ENCODE measurements at regions of chr21 and their contacts with region 1.

Region 1: DNA sequence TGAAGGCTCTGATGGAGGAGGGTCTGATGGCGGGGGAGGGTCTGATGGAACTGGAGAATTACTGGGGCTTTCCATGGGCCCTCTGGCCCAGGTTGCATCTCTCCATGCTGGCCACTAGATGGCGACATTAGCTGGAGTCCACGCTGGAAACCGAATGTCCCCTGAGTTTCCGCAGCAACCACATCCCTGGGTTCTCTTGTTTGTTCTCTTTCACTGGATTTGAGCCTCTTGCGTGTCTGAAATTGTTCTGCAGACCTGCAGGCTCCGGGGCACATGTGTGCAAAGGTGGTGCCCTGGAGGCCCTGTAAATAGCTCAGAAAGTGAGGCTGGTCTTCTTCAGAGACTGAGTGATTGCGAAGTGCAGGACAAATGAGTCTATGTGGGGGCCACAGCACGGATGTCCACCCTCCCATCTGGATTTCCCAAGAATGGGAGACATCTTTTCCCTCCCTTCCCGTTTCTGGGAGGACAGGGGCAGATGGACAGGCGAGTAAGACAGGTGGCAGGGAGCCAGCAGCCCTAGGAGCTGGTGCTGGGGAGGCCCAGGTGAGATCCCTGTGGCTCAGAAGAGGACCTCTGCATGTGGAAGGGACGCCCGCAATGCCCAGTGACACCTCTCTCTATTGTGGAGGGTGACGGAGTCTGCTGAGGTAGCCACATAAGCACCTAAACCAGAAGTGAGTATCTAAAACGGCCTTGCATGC is 73.2 kb upstream of the ABCG1 start:
- DNase-seq: peak; percentile 79
- ATAC-seq: peak; percentile 68
- H3K4me3 Mint-ChIP-seq: no peak overlapping the region
- H3K27ac Mint-ChIP-seq: peak overlapping the region; percentile 39
- H3K4me1 Mint-ChIP-seq: peaks cover 11% of the 10 kb centered on the region
- H3K27me3 Mint-ChIP-seq: no peaks in the 10 kb centered on the region

Region 2: GRCh38 chr21:42089093-42089631 is 56.6 kb before region 1 on chr21:
- CTCF ChIA-PET with region 1: no interaction called
- DNase-seq: no peak
- ATAC-seq: no peak
- H3K4me3 Mint-ChIP-seq: no peak overlapping the region
- H3K27ac Mint-ChIP-seq: no peak overlapping the region
- H3K4me1 Mint-ChIP-seq: peaks cover 6% of the 10 kb centered on the region
- H3K27me3 Mint-ChIP-seq: peaks cover 6% of the 10 kb centered on the region

Region 3: GRCh38 chr21:42117229-42117966 is 28.3 kb before region 1 on chr21:
- CTCF ChIA-PET with region 1: interaction called, 10 read pairs
- DNase-seq: peak; percentile 82
- ATAC-seq: peak; percentile 77
- H3K4me3 Mint-ChIP-seq: no peak overlapping the region
- H3K27ac Mint-ChIP-seq: no peak overlapping the region
- H3K4me1 Mint-ChIP-seq: peaks cover 43% of the 10 kb centered on the region
- H3K27me3 Mint-ChIP-seq: peaks cover 75% of the 10 kb centered on the region

Region 4: GRCh38 chr21:42164064-42164789 is 18.5 kb after region 1 on chr21:
- CTCF ChIA-PET with region 1: interaction called, 15 read pairs
- DNase-seq: peak; percentile 80
- ATAC-seq: peak; percentile 89
- H3K4me3 Mint-ChIP-seq: no peak overlapping the region
- H3K27ac Mint-ChIP-seq: no peak overlapping the region
- H3K4me1 Mint-ChIP-seq: peaks cover 25% of the 10 kb centered on the region
- H3K27me3 Mint-ChIP-seq: peaks cover under 1% of the 10 kb centered on the region

Region 5: GRCh38 chr21:42193131-42193671 is 47.5 kb after region 1 on chr21:
- CTCF ChIA-PET with region 1: interaction called, 13 read pairs
- DNase-seq: peak; percentile 94
- ATAC-seq: peak; percentile 40
- H3K4me3 Mint-ChIP-seq: no peak overlapping the region
- H3K27ac Mint-ChIP-seq: peak overlapping the region; percentile 58
- H3K4me1 Mint-ChIP-seq: peaks cover 71% of the 10 kb centered on the region
- H3K27me3 Mint-ChIP-seq: peaks cover 25% of the 10 kb centered on the region

Region 6: GRCh38 chr21:42233067-42233961 is 87.6 kb after region 1 on chr21:
- CTCF ChIA-PET with region 1: interaction called, 17 read pairs
- DNase-seq: peak; percentile 90
- ATAC-seq: peak; percentile 56
- H3K4me3 Mint-ChIP-seq: peak overlapping the region; percentile 23
- H3K27ac Mint-ChIP-seq: peak overlapping the region; percentile 89
- H3K4me1 Mint-ChIP-seq: peaks cover 88% of the 10 kb centered on the region
- H3K27me3 Mint-ChIP-seq: no peaks in the 10 kb centered on the region

Region 7: DNA sequence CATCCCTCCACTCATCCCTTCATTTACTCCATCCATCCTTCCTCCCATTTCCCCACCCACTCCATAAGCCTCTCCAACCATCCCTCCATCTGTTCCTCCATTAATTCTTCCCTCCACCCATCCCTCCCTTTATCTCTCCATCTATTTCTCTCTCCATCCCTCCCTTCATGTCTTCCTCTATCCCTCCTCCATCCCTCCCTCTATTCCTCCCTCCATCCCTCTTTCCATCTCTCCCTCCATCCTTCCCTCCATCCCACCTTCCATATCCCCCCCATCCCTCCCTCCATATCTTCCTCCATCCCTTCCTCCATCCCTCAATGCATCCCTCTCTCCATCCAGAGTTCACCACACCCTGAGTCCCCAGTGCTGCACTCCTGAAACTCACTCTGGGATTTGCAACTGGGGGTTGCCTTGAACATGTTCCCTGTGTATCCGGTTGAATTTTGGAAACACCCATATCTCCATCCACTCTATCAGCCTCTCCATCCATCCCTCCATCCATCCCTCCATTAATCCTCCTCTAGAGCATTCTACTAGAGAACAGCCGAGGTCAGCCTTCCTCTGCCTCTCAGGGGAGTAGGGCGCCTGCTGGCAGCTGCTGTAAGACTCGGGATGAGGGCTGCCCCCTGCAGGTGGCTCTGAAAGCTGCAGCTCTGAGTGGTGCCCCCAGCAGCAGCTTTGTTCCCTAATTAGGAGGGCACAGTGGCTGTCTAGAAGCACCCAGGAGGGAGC is 112.6 kb after region 1 on chr21:
- CTCF ChIA-PET with region 1: interaction called, 125 read pairs
- DNase-seq: peak; percentile 87
- ATAC-seq: peak; percentile 96
- H3K4me3 Mint-ChIP-seq: no peak overlapping the region
- H3K27ac Mint-ChIP-seq: no peak overlapping the region
- H3K4me1 Mint-ChIP-seq: peaks cover 3% of the 10 kb centered on the region
- H3K27me3 Mint-ChIP-seq: peaks cover 2% of the 10 kb centered on the region

Region 8: GRCh38 chr21:42381334-42381984 is 235.7 kb after region 1 on chr21:
- CTCF ChIA-PET with region 1: interaction called, 12 read pairs
- DNase-seq: peak; percentile 71
- ATAC-seq: peak; percentile 77
- H3K4me3 Mint-ChIP-seq: no peak overlapping the region
- H3K27ac Mint-ChIP-seq: no peak overlapping the region
- H3K4me1 Mint-ChIP-seq: peaks cover 15% of the 10 kb centered on the region
- H3K27me3 Mint-ChIP-seq: no peaks in the 10 kb centered on the region